Left ventricle myocardium inferior (tissue), 1 donor: ENCODE measurements at regions of chr5 and their contacts with region 1.

Region 1: DNA sequence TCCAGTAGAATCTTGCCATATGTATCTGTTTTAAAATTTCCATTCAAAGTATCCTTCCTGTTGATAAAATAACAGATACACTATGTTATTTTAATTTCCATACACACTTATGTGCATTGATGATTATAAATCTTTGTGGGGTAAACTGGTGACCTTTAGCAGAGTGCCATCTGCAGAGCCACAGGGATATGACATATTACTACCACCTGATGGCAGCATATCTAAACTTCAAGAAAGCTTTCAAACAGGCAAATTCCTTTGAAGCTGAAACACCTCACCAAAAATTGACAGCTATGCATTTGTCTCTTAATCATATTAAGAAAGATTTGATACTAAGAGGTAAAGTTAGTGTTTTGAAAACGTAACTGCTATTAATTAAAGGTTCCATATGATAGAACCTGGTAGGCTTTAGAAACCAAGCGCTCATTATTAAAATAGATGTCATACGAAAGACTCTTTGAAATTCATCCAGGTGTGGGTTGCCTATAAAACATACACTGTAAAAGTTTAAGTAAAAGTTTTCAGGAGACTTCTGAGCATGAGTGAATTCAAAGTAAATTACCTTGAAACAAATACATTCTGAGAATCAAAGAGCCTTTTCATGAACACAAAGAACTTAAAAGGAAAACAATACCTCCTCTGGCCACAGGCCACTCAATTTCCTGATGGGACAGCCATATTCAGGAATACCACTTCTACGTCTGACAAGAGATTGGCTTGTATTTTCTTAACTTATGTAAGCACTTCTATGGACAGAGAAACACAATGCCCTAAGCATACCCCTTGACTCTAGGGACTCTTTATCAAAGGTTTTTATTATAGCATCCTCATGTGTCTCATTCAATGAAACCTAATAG is 93.3 kb downstream of the KIAA0825 start:
- DNase-seq: no peak
- H3K4me3 ChIP-seq: no peak overlapping the region
- H3K27ac ChIP-seq: no peak overlapping the region
- H3K4me1 ChIP-seq: peaks cover 5% of the 10 kb centered on the region
- H3K27me3 ChIP-seq: no peaks in the 10 kb centered on the region
- CTCF ChIP-seq: peak; percentile 65

Region 2: GRCh38 chr5:94674490-94675382 is 149.7 kb after region 1 on chr5:
- intact Hi-C with region 1: loop called (anchors 10 kb)
- DNase-seq: no peak
- H3K4me3 ChIP-seq: no peak overlapping the region
- H3K27ac ChIP-seq: no peak overlapping the region
- H3K4me1 ChIP-seq: peaks cover 23% of the 10 kb centered on the region
- H3K27me3 ChIP-seq: no peaks in the 10 kb centered on the region
- CTCF ChIP-seq: no peak

Region 3: GRCh38 chr5:94736498-94736897 is 211.4 kb after region 1 on chr5:
- intact Hi-C with region 1: loop called (anchors 5 kb)
- DNase-seq: no peak
- H3K4me3 ChIP-seq: no peak overlapping the region
- H3K27ac ChIP-seq: no peak overlapping the region
- H3K4me1 ChIP-seq: no peaks in the 10 kb centered on the region
- H3K27me3 ChIP-seq: no peaks in the 10 kb centered on the region
- CTCF ChIP-seq: no peak

Region 4: DNA sequence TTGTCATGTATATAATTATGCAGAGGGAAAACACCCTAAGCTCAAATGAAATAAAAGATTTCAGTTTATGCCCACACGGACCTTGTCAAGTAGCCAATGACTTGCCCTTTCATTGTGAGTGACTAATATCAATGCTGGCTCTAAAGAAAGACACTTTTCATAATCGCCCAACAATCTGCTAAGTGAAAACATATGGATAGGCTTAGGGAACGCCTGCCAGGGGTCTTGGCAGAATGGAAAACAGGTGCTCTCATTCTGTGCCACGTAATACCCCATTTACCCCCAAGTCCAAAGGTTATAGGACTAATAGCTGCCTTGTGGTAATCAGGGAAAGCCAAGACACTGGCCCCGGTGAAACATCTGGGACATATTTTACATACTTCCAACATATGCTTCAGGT is 251.1 kb after region 1 on chr5:
- intact Hi-C with region 1: no loop called
- DNase-seq: no peak
- H3K4me3 ChIP-seq: no peak overlapping the region
- H3K27ac ChIP-seq: no peak overlapping the region
- H3K4me1 ChIP-seq: no peaks in the 10 kb centered on the region
- H3K27me3 ChIP-seq: no peaks in the 10 kb centered on the region
- CTCF ChIP-seq: no peak